ENCODE measurements at regions of chr2 and their contacts with region 1.

Region 1: DNA sequence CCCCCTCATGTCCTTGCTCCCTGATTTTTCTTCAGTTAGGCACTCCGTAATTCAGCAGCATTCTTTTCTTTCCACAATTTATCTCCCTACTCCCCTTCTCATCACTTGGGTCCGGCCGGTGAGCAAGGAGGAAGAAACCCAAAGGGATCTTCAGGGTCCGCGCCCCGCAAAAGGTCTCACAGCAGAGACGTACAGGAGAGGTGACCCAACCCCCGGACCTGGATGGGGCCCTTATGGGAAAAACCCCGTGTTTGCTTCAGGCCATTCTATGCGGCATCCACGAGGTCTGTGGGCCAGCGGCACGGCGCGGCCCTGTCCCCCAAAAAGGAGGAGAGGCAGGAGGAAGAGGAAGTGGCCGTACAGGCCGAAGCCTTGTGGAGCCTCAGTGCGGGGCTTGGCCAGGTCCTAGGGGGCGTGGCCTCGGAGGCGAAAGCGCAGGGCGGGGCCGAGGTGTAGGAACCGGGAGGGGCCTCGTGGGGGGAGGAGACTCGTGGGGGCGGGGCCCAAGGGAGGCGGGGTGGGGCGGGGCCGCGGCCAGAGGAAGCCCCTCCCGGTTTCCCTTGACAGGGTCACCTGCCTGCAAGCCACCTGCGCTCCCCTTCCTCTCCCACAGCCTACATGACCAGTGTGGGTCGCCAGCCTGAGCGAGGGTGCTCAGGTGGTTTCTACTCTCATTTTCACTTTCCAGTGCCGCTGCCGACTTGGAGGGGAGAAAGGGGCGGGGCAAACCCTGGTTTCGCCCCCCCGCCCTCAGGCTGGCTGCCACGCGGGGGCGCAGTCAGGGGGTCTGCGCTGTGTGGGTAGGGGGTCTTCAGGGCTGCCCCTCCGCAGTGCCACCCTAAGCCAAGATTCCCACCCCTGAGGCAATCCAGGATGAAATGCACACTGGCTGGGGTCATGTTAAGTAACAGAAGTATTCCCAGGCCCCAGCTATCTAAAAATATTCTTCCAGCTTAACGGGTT is 156.4 kb upstream of the XPO1 start:
- DNase-seq: peak; percentile 65 to 89 (median 82)
- ATAC-seq: peak; percentile 95
- H3K4me3 ChIP-seq: peak overlapping the region; percentile 88 to 93
- H3K4me3 Mint-ChIP-seq: peak overlapping the region; percentile 90
- H3K27ac ChIP-seq: peak overlapping the region; percentile 43 to 63
- H3K27ac Mint-ChIP-seq: peak overlapping the region; percentile 87
- H3K4me1 ChIP-seq: peaks cover 14% of the 10 kb centered on the region
- H3K4me1 Mint-ChIP-seq: peaks cover 16% of the 10 kb centered on the region
- H3K27me3 ChIP-seq: no peaks in the 10 kb centered on the region
- H3K27me3 Mint-ChIP-seq: no peaks in the 10 kb centered on the region
- CTCF ChIP-seq: peak; percentile 52

Region 2: DNA sequence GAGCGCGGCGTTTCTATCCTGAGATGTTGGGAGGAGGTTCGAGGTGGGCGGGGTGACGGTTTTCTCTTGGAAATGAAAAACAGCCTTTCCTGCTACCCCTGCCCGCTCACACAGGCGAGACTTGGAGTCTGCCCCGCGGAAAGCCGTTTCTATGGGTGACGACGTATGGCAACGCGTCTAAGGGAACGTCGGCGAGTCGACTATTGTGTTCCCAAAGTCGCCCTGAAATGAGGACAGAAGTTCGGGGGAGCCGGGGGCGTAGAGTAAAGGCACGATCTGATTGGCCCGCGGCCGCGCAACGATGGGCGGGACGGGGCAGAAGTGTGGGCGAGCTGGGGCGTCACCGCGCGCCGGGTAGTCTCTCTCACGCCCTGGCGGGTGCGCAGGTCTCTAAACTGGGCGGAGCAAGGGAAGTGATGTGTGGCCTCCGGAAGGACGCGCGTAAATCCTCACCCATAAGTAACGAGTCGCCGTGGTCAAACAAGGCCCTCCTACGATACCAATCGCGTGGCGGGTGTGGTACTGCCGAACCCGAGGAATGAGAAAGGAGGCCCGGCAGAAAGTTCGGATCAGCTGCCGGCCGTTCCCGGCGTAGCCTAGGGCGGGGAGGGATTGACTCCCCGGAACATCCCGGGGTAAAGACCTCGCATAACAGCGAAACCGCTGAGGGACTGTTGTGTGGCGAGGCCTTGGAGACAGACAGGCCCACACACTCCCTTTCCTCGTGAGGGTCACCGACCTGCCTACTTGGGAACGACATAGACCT is 69.6 kb after region 1 on chr2:
- CTCF ChIA-PET with region 1: no interaction called
- POLR2A ChIA-PET with region 1: no interaction called
- intact Hi-C with region 1: loop called (anchors 1 kb)
- DNase-seq: peak; percentile 91 to 99 (median 94)
- ATAC-seq: peak; percentile 97
- H3K4me3 ChIP-seq: peak overlapping the region; percentile 90 to 91
- H3K4me3 Mint-ChIP-seq: peak overlapping the region; percentile 96
- H3K27ac ChIP-seq: peak overlapping the region; percentile 99 to 100
- H3K27ac Mint-ChIP-seq: peak overlapping the region; percentile 98
- H3K4me1 ChIP-seq: no peaks in the 10 kb centered on the region
- H3K4me1 Mint-ChIP-seq: peaks cover 12% of the 10 kb centered on the region
- H3K27me3 ChIP-seq: no peaks in the 10 kb centered on the region
- H3K27me3 Mint-ChIP-seq: no peaks in the 10 kb centered on the region
- CTCF ChIP-seq: no peak